Astrocyte of the cerebellum (primary cell): ENCODE measurements at regions of chr18 and their contacts with region 1.

Region 1: DNA sequence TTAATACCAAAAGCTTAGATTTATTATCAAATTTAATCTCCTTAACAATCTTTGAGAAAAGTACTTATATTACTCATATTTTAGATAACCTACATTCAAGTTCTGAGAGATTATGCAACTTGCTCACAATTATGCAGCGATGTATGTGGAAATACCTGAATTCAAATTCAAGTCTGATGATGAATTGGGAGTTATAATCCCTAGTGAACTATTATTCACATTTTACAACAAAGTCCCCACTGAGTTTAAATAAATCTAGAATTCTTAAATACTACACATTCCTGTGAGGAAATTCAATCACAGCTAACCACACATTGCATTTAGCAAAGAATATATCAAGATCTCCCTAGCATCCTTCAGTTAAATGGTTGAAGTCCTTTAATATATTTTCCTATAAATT is 278.4 kb downstream of the NOL4 start:
- DNase-seq: no peak
- H3K4me3 ChIP-seq: no peak overlapping the region
- CTCF ChIP-seq: no peak

Region 2: GRCh38 chr18:33606621-33607020 is 339.7 kb before region 1 on chr18:
- in situ Hi-C with region 1: no loop called
- DNase-seq: no peak
- H3K4me3 ChIP-seq: no peak overlapping the region
- CTCF ChIP-seq: no peak

Region 3: GRCh38 chr18:33898427-33898826 is 47.9 kb before region 1 on chr18:
- in situ Hi-C with region 1: loop called (anchors 5 kb)
- DNase-seq: no peak
- H3K4me3 ChIP-seq: no peak overlapping the region
- CTCF ChIP-seq: no peak